IMR-90 (cell line): ENCODE measurements at regions of chr10 and their contacts with region 1.

Region 1: GRCh38 chr10:119080521-119081260 is at the start of gene EIF3A:
- DNase-seq: peak; percentile 90
- ATAC-seq: peak; percentile 87
- H3K4me3 ChIP-seq: peak within 1 kb of the TSS; percentile 85
- H3K27ac ChIP-seq: peak within 1 kb of the TSS; percentile 96
- H3K4me1 ChIP-seq: 0 out of 2 replicates have a peak, but pooled peaks cover 1% of the 10 kb centered on the region
- H3K27me3 ChIP-seq: no peaks in the 10 kb centered on the region
- CTCF ChIP-seq: no peak
- POLR2A ChIP-seq: peak; percentile 96
- RAD21 ChIP-seq: no peak
- total RNA-seq, gene EIF3A: 145 and 156 TPM in 2 replicates

Region 2: DNA sequence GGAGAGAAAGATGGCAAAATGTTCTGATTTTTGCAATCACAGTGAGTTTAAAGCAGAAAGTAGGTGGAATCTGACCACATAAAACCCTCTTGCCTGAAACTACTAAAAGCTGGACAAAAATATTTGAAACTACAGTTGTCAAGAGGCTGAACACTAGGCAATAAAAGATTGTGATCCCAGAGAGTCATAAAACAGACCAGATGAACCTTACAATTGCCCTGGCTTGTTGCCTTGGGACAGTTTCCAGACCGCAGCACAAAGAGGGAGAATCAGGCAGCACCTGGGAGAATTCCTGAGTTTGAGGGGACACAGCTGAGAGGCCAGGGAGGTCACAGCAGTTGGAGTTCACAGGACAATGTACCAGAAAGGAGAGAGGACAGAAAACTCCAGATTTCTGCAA is 158.5 kb before region 1 on chr10:
- CTCF ChIA-PET with region 1: no interaction called
- POLR2A ChIA-PET with region 1: no interaction called
- dilution Hi-C with region 1: no loop called
- in situ Hi-C with region 1: no loop called
- intact Hi-C with region 1: no loop called
- DNase-seq: no peak
- ATAC-seq: no peak
- H3K4me3 ChIP-seq: no peak overlapping the region
- H3K27ac ChIP-seq: no peak overlapping the region
- H3K4me1 ChIP-seq: no peaks in the 10 kb centered on the region
- H3K27me3 ChIP-seq: peaks cover 13% of the 10 kb centered on the region
- CTCF ChIP-seq: no peak
- POLR2A ChIP-seq: no peak
- RAD21 ChIP-seq: no peak

Region 3: GRCh38 chr10:118990326-118990725 is 90.4 kb before region 1 on chr10:
- CTCF ChIA-PET with region 1: no interaction called
- POLR2A ChIA-PET with region 1: no interaction called
- dilution Hi-C with region 1: no loop called
- in situ Hi-C with region 1: no loop called
- intact Hi-C with region 1: no loop called
- DNase-seq: no peak
- ATAC-seq: no peak
- H3K4me3 ChIP-seq: no peak overlapping the region
- H3K27ac ChIP-seq: no peak overlapping the region
- H3K4me1 ChIP-seq: no peaks in the 10 kb centered on the region
- H3K27me3 ChIP-seq: peaks cover 30% of the 10 kb centered on the region
- CTCF ChIP-seq: no peak
- POLR2A ChIP-seq: no peak
- RAD21 ChIP-seq: no peak

Region 4: DNA sequence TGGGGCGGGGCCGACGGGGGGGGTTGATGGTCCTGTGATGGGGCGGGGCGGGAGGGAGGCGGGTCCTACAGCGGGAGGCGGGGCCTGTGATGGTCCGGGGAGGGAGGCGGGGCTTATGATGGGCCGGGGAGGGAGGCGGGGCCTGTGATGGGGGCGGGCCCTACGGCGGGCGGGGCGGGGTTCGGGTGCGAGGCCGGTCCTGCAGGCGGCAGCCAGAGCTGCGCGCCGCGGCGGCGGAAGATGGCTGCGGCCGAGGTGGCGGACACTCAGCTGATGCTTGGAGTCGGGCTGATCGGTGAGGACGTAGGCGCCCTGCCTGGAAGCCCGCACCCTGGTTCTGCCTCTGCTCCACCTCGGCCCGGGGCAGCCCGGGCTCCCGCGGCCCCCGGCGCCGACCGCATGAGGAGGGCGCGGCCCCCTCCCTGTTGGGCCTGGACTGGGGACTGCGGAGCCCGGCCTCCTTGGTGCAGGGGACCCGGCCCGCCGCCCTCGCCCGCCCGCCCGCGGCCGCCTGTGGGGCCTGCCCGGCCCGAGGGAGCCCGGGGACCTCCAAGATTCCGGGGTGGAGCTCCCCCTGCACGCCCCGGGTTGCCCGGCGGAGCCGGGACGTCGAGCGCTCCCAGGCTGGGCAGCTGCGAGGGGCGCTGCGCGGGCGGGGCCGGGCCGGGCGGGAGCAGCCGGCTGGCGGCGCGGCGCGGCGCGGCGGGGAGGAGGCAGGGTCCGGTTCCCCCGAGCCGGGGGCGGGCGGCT is 23.4 kb after region 1 on chr10 and contains the start of gene DENND10:
- CTCF ChIA-PET with region 1: no interaction called
- POLR2A ChIA-PET with region 1: no interaction called
- dilution Hi-C with region 1: no loop called
- in situ Hi-C with region 1: no loop called
- intact Hi-C with region 1: loop called (anchors 2 kb)
- DNase-seq: peak; percentile 72
- ATAC-seq: peak; percentile 95
- H3K4me3 ChIP-seq: peak within 1 kb of the TSS; percentile 93
- H3K27ac ChIP-seq: peak within 1 kb of the TSS; percentile 68
- H3K4me1 ChIP-seq: peaks cover 4% of the 10 kb centered on the region; the same call in 1 of the 2 replicates
- H3K27me3 ChIP-seq: no peaks in the 10 kb centered on the region
- CTCF ChIP-seq: no peak; the same call in 1 of the 2 replicates
- POLR2A ChIP-seq: peak; percentile 78
- RAD21 ChIP-seq: no peak
- total RNA-seq, gene DENND10: 80.3 and 81.4 TPM in 2 replicates